ENCODE measurements at regions of chr20 and their contacts with region 1.

Region 1: DNA sequence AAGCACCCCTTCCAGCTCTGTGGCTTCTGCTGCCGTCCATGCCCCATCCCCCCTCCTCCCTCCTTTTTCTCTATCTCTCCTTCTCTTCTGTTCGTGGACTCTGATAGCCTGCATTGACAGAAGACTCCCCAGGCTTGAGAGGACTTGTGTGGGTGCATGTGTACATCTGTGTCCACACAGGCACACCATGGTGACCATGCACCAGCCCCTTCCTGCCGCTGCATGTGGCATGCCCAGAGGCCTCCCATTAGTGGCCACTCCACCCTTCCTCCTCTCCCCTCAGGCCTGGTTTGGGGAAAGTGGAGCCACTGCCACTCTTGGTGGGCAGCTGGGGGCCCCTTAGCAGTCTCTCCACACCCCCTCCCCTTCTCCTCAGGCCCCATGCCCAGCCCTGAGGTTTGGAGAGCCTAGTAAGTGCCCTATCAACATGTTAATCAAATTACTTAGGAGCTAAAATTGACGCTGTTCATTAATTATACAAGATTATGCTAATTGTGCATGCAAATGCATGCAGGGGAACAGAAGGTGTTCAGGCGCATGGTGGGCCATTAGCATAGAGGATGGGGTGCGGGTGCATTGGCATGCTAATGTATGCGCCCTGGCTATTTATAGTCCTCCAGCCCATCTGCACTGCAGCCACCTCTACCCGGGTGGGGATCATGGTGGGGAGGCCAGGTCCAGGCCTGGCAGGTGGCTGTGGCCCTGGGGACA is 45.9 kb downstream of the EBF4 start:
- DNase-seq: no peak
- H3K4me3 ChIP-seq: no peak overlapping the region
- H3K27ac ChIP-seq: no peak overlapping the region
- H3K4me1 ChIP-seq: no peaks in the 10 kb centered on the region
- H3K27me3 ChIP-seq: peaks cover 2% of the 10 kb centered on the region
- CTCF ChIP-seq: no peak

Region 2: GRCh38 chr20:2643708-2644107 is 94.8 kb before region 1 on chr20:
- CTCF ChIA-PET with region 1: no interaction called
- dilution Hi-C with region 1: no loop called
- in situ Hi-C with region 1: no loop called
- intact Hi-C with region 1: no loop called
- DNase-seq: no peak
- H3K4me3 ChIP-seq: no peak overlapping the region
- H3K27ac ChIP-seq: no peak overlapping the region
- H3K4me1 ChIP-seq: no peaks in the 10 kb centered on the region
- H3K27me3 ChIP-seq: no peaks in the 10 kb centered on the region
- CTCF ChIP-seq: no peak

Region 3: DNA sequence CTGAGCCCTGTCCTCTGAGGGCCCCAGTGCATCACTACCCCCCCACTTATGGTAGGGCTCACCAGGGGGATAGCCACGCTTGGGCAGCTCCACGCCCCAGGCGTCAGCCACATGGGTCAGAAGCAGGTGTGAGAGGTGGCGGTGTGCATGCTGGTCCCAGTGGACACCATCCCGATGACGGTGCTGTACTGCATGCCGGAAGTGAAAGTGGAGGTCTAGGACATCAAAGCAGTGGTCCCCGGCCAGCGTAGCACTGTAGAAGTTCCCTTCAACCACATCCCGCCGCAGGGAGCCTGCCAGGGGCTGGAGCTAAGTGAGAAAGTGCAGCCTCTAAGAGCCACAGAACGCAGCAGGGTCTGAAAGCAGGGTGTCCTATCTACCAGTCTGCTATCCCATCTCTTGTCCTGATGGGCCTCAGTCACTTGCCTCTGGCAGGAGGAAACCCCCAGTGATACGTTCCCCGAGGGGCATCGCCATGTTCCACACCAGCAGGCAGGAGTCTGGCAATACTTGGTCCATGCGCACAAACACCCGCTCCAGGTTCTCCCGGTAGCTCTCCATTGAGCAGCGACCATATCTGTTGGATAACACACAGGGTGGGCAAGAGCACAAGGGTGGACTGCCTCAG is 99.8 kb after region 1 on chr20:
- CTCF ChIA-PET with region 1: no interaction called
- dilution Hi-C with region 1: loop called (anchors 5 kb)
- in situ Hi-C with region 1: no loop called
- intact Hi-C with region 1: no loop called
- DNase-seq: no peak
- H3K4me3 ChIP-seq: no peak overlapping the region
- H3K27ac ChIP-seq: no peak overlapping the region
- H3K4me1 ChIP-seq: peaks cover 14% of the 10 kb centered on the region
- H3K27me3 ChIP-seq: no peaks in the 10 kb centered on the region
- CTCF ChIP-seq: no peak

Measured in mammary epithelial cell (primary cell).